ENCODE measurements at regions of chr11 and their contacts with region 1.

Region 1: GRCh38 chr11:65615229-65615941 is at the start of gene PCNX3:
- DNase-seq: peak; percentile 100
- ATAC-seq: peak; percentile 93
- H3K4me3 Mint-ChIP-seq: peak within 1 kb of the TSS; percentile 96
- H3K27ac Mint-ChIP-seq: peak within 1 kb of the TSS; percentile 94
- H3K4me1 Mint-ChIP-seq: peaks cover 38% of the 10 kb centered on the region
- H3K27me3 Mint-ChIP-seq: no peaks in the 10 kb centered on the region
- total RNA-seq, gene PCNX3: 27.9 to 30.7 TPM

Region 2: DNA sequence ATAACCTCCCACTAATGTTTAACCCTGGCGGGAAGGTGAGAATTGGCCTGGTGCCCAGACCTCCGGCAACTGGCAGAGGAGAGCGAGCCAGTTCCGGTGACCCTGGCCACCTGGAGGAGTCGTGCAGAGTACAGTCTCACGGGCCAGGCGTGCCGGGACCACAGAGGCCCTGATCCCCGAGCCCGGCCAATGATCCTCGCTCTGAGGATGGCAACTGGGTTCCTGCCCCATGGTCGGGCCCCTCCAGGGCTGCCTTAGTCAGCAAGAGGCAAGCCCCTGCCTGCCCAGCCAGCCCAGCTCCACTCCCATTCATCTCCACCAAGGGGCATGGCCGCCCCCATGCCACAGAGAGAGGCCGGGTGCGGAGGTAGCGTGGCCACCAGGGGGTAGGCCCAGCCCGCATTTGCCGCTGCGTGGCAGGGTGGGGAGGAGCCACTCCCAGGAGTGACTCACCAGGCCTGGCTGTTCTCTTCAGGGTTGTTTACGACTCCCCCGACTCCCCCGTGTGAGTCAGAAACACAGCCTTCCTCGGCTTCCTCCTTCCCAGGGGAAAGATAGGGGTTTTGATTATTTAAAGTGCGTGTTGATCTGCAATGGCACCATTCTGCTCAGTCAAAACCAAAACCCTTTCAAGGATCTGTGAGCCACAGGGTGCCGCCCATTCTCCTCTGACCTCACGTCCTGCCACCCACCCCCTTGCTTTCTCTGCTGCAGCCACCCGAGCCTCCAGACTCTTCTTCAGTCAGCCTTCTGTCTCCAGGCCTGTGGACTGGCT is 233.2 kb before region 1 on chr11 and contains the start of gene SLC25A45:
- CTCF ChIA-PET with region 1: no interaction called
- POLR2A ChIA-PET with region 1: interaction called, 3 read pairs
- intact Hi-C with region 1: loop called (anchors 1 kb)
- DNase-seq: peak; percentile 97
- ATAC-seq: peak; percentile 84
- H3K4me3 Mint-ChIP-seq: peak within 1 kb of the TSS; percentile 78
- H3K27ac Mint-ChIP-seq: peak within 1 kb of the TSS; percentile 97
- H3K4me1 Mint-ChIP-seq: peaks cover 37% of the 10 kb centered on the region
- H3K27me3 Mint-ChIP-seq: no peaks in the 10 kb centered on the region
- total RNA-seq, gene SLC25A45: 13.2 to 14.3 TPM

Region 3: DNA sequence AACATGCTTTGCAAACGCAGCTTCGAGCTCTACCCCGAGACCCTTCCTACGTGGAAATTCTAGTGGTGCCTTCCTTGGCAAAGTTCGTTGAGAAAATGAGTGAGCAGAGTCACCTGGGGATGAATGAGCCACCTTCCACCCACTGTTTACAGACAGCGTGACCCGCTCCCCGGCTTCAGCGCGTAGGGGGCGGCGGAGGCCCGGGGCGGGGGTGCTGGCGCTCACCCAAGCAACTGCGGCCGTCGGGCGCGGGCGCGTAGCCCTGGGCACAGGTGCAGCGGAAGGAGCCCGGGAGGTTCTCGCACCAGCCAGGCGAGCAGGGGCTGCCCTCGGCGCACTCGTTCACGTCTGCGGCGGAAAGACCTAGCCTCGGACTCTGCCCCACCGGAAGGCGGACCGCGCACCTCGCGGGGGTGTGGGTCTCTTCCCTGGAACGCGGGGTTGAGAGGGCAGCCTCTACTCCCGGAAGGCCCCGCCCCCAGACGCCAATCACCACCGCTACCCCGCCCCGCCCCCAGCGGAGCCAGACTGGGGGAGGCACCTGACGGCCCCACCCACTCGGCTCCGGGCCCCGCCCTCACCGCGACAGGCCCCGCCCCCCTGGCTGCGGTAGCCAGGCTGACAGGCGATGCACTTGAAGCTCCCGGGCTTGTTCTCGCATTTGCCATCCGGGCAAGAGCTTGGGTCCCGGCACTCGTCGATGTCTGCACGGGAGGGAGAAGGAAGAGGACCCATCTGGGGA is 69.0 kb before region 1 on chr11:
- CTCF ChIA-PET with region 1: interaction called, 9 read pairs
- POLR2A ChIA-PET with region 1: interaction called, 3 read pairs
- intact Hi-C with region 1: loop called in 1 of 2 experiments (anchors 1 kb)
- DNase-seq: peak; percentile 99
- ATAC-seq: peak; percentile 85
- H3K4me3 Mint-ChIP-seq: peak overlapping the region; percentile 72
- H3K27ac Mint-ChIP-seq: peak overlapping the region; percentile 87
- H3K4me1 Mint-ChIP-seq: peaks cover 46% of the 10 kb centered on the region
- H3K27me3 Mint-ChIP-seq: no peaks in the 10 kb centered on the region

Region 4: GRCh38 chr11:65637794-65638317 is 22.5 kb after region 1 on chr11 and contains the start of gene SIPA1:
- CTCF ChIA-PET with region 1: interaction called, 4 read pairs
- POLR2A ChIA-PET with region 1: interaction called, 9 read pairs
- intact Hi-C with region 1: loop called (anchors 1 kb)
- DNase-seq: peak; percentile 86
- ATAC-seq: peak; percentile 67
- H3K4me3 Mint-ChIP-seq: peak within 1 kb of the TSS; percentile 90
- H3K27ac Mint-ChIP-seq: peak within 1 kb of the TSS; percentile 95
- H3K4me1 Mint-ChIP-seq: peaks cover 42% of the 10 kb centered on the region
- H3K27me3 Mint-ChIP-seq: no peaks in the 10 kb centered on the region
- total RNA-seq, gene SIPA1: 181 to 202 TPM

Region 5: DNA sequence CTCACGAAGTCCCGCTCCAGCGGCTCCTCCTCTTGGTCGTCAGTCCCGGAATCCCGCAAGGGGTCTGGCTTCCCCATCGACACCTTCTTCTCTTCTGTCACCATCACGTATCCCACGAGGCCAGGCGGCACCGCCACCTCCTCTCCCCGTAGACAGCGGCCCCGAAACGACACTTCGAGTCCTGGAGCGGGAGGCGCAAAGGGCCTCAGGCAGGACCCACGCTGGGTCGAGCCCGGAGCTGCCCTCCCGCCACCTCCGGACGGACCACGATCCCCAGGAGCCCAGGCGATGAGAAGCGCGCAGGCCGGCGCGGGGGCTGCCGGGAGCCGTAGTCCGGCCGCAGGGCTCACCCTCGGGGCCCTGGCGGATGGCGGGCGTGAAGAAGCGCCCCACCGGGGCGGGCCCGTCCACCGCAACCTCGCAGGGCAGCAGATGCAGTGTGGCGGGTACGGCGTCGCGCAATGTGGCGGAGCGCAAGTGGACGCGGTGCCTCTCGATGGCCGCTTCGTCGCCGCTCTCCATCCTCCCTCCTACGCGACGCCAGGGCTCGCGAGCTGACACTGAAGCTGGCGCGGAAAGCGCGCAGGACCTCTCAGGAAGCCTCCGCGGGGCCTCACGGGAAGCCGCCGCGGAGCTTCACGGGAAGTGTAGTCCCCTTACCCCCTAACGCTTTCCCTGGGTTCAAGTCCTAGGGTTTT is 105.0 kb after region 1 on chr11 and contains the start of gene RNASEH2C:
- CTCF ChIA-PET with region 1: interaction called, 3 read pairs
- POLR2A ChIA-PET with region 1: interaction called, 3 read pairs
- intact Hi-C with region 1: loop called in 1 of 2 experiments (anchors 1 kb)
- DNase-seq: peak; percentile 92
- ATAC-seq: peak; percentile 94
- H3K4me3 Mint-ChIP-seq: peak within 1 kb of the TSS; percentile 84
- H3K27ac Mint-ChIP-seq: peak within 1 kb of the TSS; percentile 88
- H3K4me1 Mint-ChIP-seq: peaks cover 23% of the 10 kb centered on the region
- H3K27me3 Mint-ChIP-seq: no peaks in the 10 kb centered on the region
- total RNA-seq, gene RNASEH2C: 72.5 to 96.8 TPM

Region 6: DNA sequence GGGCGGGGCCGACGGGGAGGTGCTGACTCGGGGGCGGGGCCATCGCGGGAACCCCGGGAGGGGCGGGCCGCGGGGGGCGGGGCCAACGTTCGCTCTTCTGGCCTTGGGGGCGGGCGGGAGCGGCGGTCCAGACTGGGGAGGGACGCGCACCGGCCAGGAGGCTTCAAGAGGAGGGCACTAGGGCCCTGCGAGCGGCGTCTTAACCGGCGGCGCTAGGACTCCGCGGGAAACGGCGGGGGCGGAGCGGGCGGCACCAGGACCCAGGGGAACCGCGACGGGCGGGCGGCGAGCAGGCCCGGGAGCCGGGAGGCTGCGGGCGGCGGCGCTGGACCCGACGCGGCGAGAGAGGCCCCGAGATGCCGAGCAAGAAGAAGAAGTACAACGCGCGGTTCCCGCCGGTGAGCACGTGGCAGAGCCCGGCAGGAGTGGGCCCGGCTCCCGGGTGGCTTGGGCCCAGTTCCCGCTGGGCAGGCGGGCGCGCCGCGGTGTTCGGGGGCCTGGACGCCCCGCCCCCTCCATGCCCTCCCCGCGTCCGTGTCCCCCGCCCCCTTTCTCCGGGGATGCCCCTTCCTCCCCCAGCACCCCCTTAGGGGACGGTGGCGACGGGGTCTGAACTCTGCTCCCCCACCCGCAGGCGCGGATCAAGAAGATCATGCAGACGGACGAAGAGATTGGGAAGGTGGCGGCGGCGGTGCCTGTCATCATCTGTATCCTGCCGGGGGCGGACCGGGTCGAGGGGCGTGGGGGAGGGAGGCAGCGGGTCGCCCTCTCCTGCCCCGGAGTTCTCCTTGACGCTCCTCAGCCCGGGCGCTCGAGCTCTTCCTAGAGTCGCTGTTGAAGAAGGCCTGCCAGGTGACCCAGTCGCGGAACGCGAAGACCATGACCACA is 304.0 kb after region 1 on chr11 and contains the start of gene DRAP1:
- CTCF ChIA-PET with region 1: no interaction called
- POLR2A ChIA-PET with region 1: no interaction called
- intact Hi-C with region 1: loop called in 1 of 2 experiments (anchors 1 kb)
- DNase-seq: peak; percentile 100
- ATAC-seq: peak; percentile 94
- H3K4me3 Mint-ChIP-seq: peak within 1 kb of the TSS; percentile 91
- H3K27ac Mint-ChIP-seq: peak within 1 kb of the TSS; percentile 88
- H3K4me1 Mint-ChIP-seq: peaks cover 35% of the 10 kb centered on the region
- H3K27me3 Mint-ChIP-seq: no peaks in the 10 kb centered on the region
- total RNA-seq, gene DRAP1: 111 to 158 TPM

Region 7: GRCh38 chr11:66268283-66268951 is 653.0 kb after region 1 on chr11 and contains the start of gene RAB1B:
- CTCF ChIA-PET with region 1: no interaction called
- POLR2A ChIA-PET with region 1: no interaction called
- intact Hi-C with region 1: loop called in 1 of 2 experiments (anchors 1 kb)
- DNase-seq: peak; percentile 100
- ATAC-seq: peak; percentile 88
- H3K4me3 Mint-ChIP-seq: peak within 1 kb of the TSS; percentile 100
- H3K27ac Mint-ChIP-seq: peak within 1 kb of the TSS; percentile 97
- H3K4me1 Mint-ChIP-seq: peaks cover 28% of the 10 kb centered on the region
- H3K27me3 Mint-ChIP-seq: no peaks in the 10 kb centered on the region
- total RNA-seq, gene RAB1B: 114 to 147 TPM

Measured in activated CD4-positive, alpha-beta T cell treated with anti-CD3 and anti-CD28 coated beads for 36 hours (primary cell).